Naive thymus-derived CD4-positive, alpha-beta T cell (primary cell): ENCODE measurements at regions of chr6 and their contacts with region 1.

Region 1: DNA sequence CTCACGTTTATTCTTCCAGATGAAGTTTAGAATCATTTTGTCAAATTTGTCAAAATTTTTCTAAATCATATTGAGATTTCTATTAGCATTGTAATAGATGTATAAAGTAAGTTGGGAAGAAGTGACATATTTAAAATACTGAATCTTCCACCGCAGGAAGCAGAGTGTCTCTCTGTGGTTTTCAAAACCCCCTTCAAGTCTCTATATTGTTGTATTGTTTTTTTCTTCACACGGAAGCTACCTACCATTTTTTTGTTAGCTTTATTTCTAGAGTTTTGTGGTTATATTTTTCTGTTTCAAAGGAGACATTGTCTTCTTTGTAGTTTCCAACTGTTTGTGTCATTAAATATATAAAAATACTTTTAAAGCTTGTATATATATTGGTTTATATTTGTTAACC is 188.6 kb downstream of the ZDHHC14 start:
- DNase-seq: peak in 7 of 9 donors; percentile 30 to 78 (median 68)
- ATAC-seq: peak; percentile 90
- H3K4me3 ChIP-seq: no peak overlapping the region
- H3K4me3 Mint-ChIP-seq: peak overlapping the region in 8 of 10 donors; percentile 37 to 83 (median 67)
- H3K27ac ChIP-seq: no peak overlapping the region
- H3K27ac Mint-ChIP-seq: peak overlapping the region in 4 of 9 donors; percentile 21 to 76 (median 40)
- H3K4me1 ChIP-seq: peaks cover 11 to 13% of the 10 kb centered on the region in 2 donors
- H3K4me1 Mint-ChIP-seq: peaks cover 5 to 42% (median 27%) of the 10 kb centered on the region in 7 donors
- H3K27me3 ChIP-seq: no peaks in the 10 kb centered on the region
- H3K27me3 Mint-ChIP-seq: peaks cover 0 to 7% (median 0%) of the 10 kb centered on the region in 5 donors

Region 2: GRCh38 chr6:157527471-157527907 is 42.1 kb before region 1 on chr6:
- CTCF ChIA-PET with region 1: interaction called, 3 read pairs
- POLR2A ChIA-PET with region 1: no interaction called
- intact Hi-C with region 1: loop called in 1 of 2 experiments (anchors 2 kb)
- DNase-seq: peak in 6 of 9 donors; percentile 14 to 43 (median 31)
- ATAC-seq: peak; percentile 55
- H3K4me3 ChIP-seq: no peak overlapping the region
- H3K4me3 Mint-ChIP-seq: peak overlapping the region in 1 of 10 donors; percentile 44
- H3K27ac ChIP-seq: no peak overlapping the region
- H3K27ac Mint-ChIP-seq: peak overlapping the region in 2 of 9 donors; percentile 83
- H3K4me1 ChIP-seq: peaks cover 0 to 9% of the 10 kb centered on the region in 2 donors
- H3K4me1 Mint-ChIP-seq: peaks cover 13 to 50% (median 15%) of the 10 kb centered on the region in 7 donors
- H3K27me3 ChIP-seq: no peaks in the 10 kb centered on the region
- H3K27me3 Mint-ChIP-seq: no peaks in the 10 kb centered on the region

Region 3: DNA sequence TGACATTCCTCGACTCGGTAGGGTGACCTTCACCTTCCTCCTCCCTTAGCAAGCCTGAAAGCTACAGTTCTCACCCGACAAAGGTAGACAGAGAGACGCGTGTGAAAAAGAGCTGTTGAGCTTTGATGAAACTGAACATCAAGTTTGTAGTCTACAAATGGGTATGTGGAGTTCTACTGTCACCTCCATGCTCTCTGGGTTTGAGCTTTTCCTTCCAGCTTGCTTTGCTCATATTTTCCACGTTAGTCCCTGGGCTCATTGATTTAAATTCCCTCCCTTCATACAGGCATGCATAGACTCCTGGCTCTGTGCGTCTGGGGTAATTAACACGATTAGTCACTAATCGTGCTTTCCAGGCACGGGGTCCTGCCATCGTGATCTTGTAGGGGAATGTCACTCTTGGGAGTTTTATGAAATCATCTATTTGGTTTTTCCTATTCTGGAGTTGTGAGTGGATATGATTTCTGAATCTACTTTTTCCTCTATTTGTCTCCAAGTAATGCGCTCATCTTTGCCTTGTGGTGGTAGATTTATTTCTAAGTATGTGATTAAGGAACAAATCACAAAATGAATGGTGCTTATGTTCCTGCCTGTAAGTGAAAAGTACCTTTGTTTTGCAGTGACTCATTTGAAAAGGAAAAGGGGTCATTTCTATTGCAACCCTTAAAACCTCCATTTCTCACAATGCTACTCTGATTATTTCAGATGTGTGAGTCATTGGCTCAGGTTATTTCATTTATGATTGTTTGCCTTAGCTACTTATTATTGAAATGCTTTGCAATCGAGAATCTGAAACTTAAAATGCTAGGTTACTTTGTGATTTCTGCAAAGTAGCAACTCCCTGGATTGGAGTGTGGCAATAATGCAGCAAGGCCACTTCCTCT is 34.0 kb before region 1 on chr6:
- CTCF ChIA-PET with region 1: no interaction called
- POLR2A ChIA-PET with region 1: no interaction called
- intact Hi-C with region 1: loop called in 1 of 2 experiments (anchors 2 kb)
- DNase-seq: peak in 1 of 9 donors; percentile 22
- ATAC-seq: peak; percentile 60
- H3K4me3 ChIP-seq: no peak overlapping the region
- H3K4me3 Mint-ChIP-seq: peak overlapping the region in 9 of 10 donors; percentile 25 to 76 (median 51)
- H3K27ac ChIP-seq: no peak overlapping the region
- H3K27ac Mint-ChIP-seq: peak overlapping the region; percentile 1 to 87 (median 45)
- H3K4me1 ChIP-seq: peaks cover 11 to 45% of the 10 kb centered on the region in 2 donors
- H3K4me1 Mint-ChIP-seq: peaks cover 22 to 61% (median 35%) of the 10 kb centered on the region in 7 donors
- H3K27me3 ChIP-seq: no peaks in the 10 kb centered on the region
- H3K27me3 Mint-ChIP-seq: no peaks in the 10 kb centered on the region

Region 4: DNA sequence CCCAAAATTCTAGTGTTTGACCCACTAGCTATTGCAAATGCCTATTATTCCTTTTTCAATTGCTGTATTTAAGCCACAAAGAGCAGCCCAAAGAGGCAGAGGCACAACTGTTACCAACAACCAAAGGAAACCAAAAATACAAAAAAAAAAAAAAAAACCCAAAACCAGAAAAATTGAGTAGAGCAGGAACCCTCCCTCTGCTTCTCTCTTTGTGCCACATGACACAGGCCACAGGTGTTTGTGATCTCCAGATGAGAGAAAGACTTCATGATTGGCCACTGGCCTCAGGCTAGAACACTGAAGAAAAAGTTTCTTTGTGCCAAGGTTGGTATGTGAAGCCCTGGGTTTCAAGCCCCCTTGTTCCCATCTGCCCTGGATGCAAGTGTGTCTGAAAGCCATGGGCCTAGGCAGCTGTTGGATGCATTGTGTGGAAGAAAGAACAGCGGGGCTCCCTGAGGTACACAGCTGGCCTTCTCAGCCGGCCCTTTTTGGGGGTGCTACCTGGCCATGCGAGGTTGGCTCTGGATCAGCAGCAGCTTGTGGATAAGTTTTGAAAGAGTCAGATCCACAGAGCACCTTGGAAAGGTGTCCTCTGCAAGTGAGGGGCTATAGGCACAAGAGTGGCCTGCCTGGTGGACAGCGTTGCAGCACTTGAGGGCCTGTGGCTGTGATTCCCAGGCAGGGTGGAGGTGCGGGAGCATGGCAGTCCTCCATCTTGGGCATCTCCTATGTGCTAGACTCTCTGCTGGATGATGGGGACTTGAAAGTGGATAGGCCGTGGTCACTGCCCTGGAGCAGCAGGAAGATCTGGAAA is 15.9 kb after region 1 on chr6:
- CTCF ChIA-PET with region 1: no interaction called
- POLR2A ChIA-PET with region 1: no interaction called
- intact Hi-C with region 1: loop called in 1 of 2 experiments (anchors 1 kb)
- DNase-seq: peak in 6 of 9 donors; percentile 16 to 62 (median 32)
- ATAC-seq: peak; percentile 60
- H3K4me3 ChIP-seq: no peak overlapping the region
- H3K4me3 Mint-ChIP-seq: peak overlapping the region in 5 of 10 donors; percentile 12 to 54 (median 26)
- H3K27ac ChIP-seq: no peak overlapping the region
- H3K27ac Mint-ChIP-seq: peak overlapping the region in 1 of 9 donors; percentile 56
- H3K4me1 ChIP-seq: peaks cover 0 to 6% of the 10 kb centered on the region in 2 donors
- H3K4me1 Mint-ChIP-seq: peaks cover 4 to 23% (median 13%) of the 10 kb centered on the region in 7 donors
- H3K27me3 ChIP-seq: no peaks in the 10 kb centered on the region
- H3K27me3 Mint-ChIP-seq: peaks cover 0 to 13% (median 0%) of the 10 kb centered on the region in 5 donors

Region 5: DNA sequence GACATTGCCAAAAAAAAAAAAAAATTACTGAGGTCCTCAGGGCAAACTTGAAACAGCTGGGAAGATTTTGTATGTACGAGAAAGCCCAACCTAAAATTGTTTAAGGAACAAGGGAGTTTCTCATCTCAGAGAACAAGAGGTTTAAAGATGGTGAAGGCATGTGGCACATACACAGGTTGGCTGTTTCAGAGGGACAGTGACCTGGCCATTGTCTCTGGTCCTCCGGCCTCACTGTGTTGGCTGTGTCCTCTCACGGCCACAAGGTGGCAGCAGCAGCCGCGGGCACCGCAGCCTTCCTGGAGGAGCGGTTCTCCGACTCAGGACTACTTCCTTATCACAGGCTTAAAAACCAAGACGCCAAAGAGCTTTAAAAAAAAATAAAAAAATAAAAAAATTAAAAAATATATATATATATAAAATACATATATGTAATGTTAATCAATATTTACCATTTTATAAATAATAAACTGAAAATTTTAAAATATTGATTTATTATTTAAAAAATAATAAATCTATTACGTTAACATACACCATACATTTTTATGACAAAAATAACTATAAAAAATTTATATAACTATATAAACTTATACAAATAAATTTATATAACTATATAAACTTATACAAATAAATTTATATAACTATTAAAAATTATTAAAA is 651.4 kb after region 1 on chr6:
- CTCF ChIA-PET with region 1: no interaction called
- POLR2A ChIA-PET with region 1: no interaction called
- intact Hi-C with region 1: no loop called
- DNase-seq: peak; percentile 23 to 73 (median 60)
- ATAC-seq: peak; percentile 91
- H3K4me3 ChIP-seq: no peak overlapping the region
- H3K4me3 Mint-ChIP-seq: no peak overlapping the region
- H3K27ac ChIP-seq: no peak overlapping the region
- H3K27ac Mint-ChIP-seq: peak overlapping the region in 1 of 9 donors; percentile 63
- H3K4me1 ChIP-seq: no peaks in the 10 kb centered on the region
- H3K4me1 Mint-ChIP-seq: peaks cover 0 to 13% (median 0%) of the 10 kb centered on the region in 7 donors
- H3K27me3 ChIP-seq: no peaks in the 10 kb centered on the region
- H3K27me3 Mint-ChIP-seq: peaks cover 0 to 4% (median 0%) of the 10 kb centered on the region in 5 donors